Breast epithelium (tissue), 4 donors: ENCODE measurements at regions of chr11 and their contacts with region 1.

Region 1: DNA sequence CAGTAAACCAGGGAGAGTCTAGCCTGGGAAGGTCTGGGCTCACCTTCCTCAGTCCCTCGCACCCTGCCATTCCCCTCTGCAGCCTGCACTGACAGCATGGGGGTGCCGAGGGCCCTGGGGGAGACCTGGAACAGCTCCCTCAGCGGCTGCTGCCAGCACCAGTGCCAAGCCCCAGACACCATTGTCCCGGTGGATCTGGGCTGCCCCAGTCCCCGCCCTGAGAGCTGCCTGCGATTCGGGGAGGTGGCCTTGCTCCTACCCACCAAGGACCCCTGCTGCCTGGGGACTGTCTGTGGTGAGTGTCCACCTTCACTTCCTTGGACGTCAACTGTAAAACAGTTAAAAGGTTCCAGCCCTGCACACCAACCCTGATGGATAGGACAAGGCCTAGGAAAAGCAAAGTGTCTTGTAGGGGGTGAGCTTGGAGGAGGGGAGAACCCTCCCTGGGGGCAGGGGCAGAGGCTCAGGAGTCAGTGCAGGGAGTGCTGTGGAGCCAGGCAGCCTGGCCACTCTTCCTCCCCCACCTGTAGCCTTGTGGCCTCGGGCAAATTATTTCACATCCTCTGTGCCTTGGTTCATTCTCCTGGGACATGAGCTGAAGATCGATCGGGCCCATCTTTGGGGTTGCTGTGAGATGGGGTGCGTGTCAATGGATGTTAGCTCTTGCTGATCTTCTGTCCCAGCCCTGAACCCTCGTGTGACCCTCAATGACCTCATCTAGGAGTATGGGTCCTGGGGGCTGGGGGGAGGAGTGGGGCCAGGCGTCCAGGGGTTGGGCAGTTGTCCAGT is 85.2 kb upstream of the MYOD1 start:
- DNase-seq: no peak
- H3K4me3 ChIP-seq: no peak overlapping the region
- H3K27ac ChIP-seq: no peak overlapping the region
- H3K4me1 ChIP-seq: no peaks in the 10 kb centered on the region
- H3K27me3 ChIP-seq: no peaks in the 10 kb centered on the region
- CTCF ChIP-seq: no peak
- POLR2A ChIP-seq: no peak

Region 2: GRCh38 chr11:17256512-17256911 is 377.7 kb before region 1 on chr11:
- intact Hi-C with region 1: no loop called
- DNase-seq: no peak
- H3K4me3 ChIP-seq: no peak overlapping the region
- H3K27ac ChIP-seq: no peak overlapping the region
- H3K4me1 ChIP-seq: no peaks in the 10 kb centered on the region
- H3K27me3 ChIP-seq: no peaks in the 10 kb centered on the region
- CTCF ChIP-seq: no peak
- POLR2A ChIP-seq: no peak

Region 3: DNA sequence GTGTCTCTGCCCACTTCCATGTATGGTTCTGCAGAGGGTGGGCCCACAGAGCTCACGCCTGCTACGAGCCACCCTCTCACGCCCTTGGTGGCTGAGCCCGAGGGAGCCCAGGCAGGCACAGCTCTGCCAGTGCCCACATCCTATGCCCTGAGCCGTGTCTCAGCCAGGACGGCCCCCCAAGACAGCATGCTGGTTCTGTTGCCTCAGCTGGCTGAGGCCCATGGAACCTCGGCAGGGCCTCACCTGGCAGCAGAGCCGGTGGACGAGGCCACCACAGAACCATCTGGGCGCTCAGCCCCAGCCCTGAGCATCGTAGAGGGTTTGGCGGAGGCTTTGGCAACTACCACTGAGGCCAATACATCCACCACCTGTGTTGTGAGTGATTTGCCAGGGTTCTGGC is 23.1 kb before region 1 on chr11:
- intact Hi-C with region 1: loop called (anchors 1 kb)
- DNase-seq: no peak
- H3K4me3 ChIP-seq: no peak overlapping the region
- H3K27ac ChIP-seq: no peak overlapping the region
- H3K4me1 ChIP-seq: no peaks in the 10 kb centered on the region
- H3K27me3 ChIP-seq: no peaks in the 10 kb centered on the region
- CTCF ChIP-seq: no peak
- POLR2A ChIP-seq: no peak